Endothelial cell of umbilical vein (primary cell): ENCODE measurements at regions of chr15 and their contacts with region 1.

Region 1: GRCh38 chr15:45037936-45038335 is 14.9 kb downstream of the SORD start:
- DNase-seq: no peak
- H3K4me3 ChIP-seq: no peak overlapping the region
- H3K27ac ChIP-seq: no peak overlapping the region
- H3K4me1 ChIP-seq: peaks cover 5% of the 10 kb centered on the region
- H3K27me3 ChIP-seq: no peaks in the 10 kb centered on the region
- CTCF ChIP-seq: no peak
- POLR2A ChIP-seq: no peak

Region 2: DNA sequence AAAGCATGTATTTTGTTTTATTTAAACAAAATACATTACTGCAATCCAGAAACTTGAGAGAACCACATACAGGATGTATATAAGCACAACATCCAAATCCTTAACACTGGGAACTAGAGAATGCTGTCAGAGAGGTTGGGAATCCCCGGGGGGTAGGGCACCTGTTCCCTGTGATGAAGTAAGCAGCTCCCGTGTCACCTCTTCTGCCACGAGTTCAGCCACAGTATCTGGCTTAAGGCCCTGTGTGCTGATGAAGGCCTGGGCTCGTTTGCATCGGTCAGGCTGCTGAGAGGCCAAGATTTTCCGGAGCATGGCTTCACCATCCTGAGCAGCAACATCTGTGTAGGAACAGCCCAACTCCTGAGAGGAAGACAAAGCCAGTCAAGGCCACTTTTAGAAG is 464.6 kb before region 1 on chr15:
- CTCF ChIA-PET with region 1: no interaction called
- POLR2A ChIA-PET with region 1: no interaction called
- dilution Hi-C with region 1: no loop called
- intact Hi-C with region 1: loop called (anchors 5 kb)
- DNase-seq: no peak
- H3K4me3 ChIP-seq: no peak overlapping the region
- H3K27ac ChIP-seq: no peak overlapping the region
- H3K4me1 ChIP-seq: no peaks in the 10 kb centered on the region
- H3K27me3 ChIP-seq: no peaks in the 10 kb centered on the region
- CTCF ChIP-seq: no peak
- POLR2A ChIP-seq: no peak

Region 3: DNA sequence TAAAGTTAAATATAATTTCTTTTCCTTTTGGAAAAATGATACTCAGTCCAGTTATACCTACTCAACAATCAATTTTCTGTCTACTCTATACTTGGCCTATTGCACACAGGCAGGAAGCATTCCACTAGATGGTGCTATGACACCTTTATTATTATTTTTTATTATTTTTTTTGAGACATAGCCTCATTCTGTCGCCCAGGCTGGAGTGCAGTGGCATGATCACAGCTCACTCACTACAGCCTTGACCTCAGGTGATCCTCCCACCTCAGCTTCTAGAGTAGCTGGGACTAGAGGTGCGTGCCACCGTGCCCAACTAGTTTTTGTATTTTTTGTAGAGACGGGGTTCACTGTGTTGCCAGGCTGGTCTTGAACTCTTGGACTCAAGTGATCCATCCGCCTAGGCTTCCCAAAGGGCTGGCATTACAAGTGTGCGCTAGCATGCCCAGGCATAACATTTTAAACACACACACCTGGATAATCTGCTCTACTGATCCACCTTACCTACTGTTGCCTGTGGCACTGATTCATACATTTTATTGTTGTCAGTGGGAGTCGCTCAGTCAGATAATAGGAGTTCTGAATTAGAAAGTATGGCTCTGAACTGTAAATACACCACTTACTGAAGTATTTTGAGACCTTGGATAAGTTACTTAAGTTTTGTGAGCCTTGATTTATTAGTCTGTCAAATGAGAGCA is 444.7 kb before region 1 on chr15:
- CTCF ChIA-PET with region 1: interaction called, 3 read pairs
- POLR2A ChIA-PET with region 1: no interaction called
- dilution Hi-C with region 1: no loop called
- intact Hi-C with region 1: loop called (anchors 5 kb)
- DNase-seq: no peak
- H3K4me3 ChIP-seq: no peak overlapping the region
- H3K27ac ChIP-seq: no peak overlapping the region
- H3K4me1 ChIP-seq: peaks cover 10% of the 10 kb centered on the region
- H3K27me3 ChIP-seq: no peaks in the 10 kb centered on the region
- CTCF ChIP-seq: peak; percentile 39 to 47
- POLR2A ChIP-seq: no peak

Region 4: DNA sequence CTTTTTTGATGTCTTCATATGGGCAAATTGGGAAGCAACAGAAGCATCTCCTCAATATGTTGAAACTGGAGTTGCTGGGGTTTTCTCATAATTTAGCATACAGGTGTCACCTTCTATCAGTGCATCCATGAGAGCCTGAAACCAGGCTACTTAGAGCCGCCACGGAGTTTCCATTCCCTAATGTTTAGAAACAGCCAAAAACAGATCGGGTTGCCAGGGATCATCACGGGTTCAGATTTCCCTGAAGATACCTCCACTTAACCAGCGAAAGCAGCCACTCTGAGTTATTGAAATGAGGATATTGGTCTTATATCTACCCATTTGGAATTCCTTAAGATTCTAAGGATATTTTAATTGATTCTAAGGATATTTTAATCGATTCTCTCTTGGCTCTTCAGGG is 66.9 kb before region 1 on chr15:
- CTCF ChIA-PET with region 1: interaction called, 62 read pairs
- POLR2A ChIA-PET with region 1: no interaction called
- dilution Hi-C with region 1: no loop called
- intact Hi-C with region 1: loop called (anchors 1 kb)
- DNase-seq: no peak
- H3K4me3 ChIP-seq: no peak overlapping the region
- H3K27ac ChIP-seq: no peak overlapping the region
- H3K4me1 ChIP-seq: no peaks in the 10 kb centered on the region
- H3K27me3 ChIP-seq: no peaks in the 10 kb centered on the region
- CTCF ChIP-seq: no peak
- POLR2A ChIP-seq: no peak

Region 5: GRCh38 chr15:45022871-45023658 is 14.9 kb before region 1 on chr15 and contains the start of gene SORD:
- CTCF ChIA-PET with region 1: interaction called, 15 read pairs
- POLR2A ChIA-PET with region 1: interaction called, 7 read pairs
- dilution Hi-C with region 1: no loop called
- intact Hi-C with region 1: no loop called
- DNase-seq: peak; percentile 90
- H3K4me3 ChIP-seq: peak within 1 kb of the TSS; percentile 46 to 75 (median 70)
- H3K27ac ChIP-seq: peak within 1 kb of the TSS; percentile 53
- H3K4me1 ChIP-seq: peaks cover 25% of the 10 kb centered on the region
- H3K27me3 ChIP-seq: peaks cover 0 to 2% of the 10 kb centered on the region in 2 experiments
- CTCF ChIP-seq: no peak
- POLR2A ChIP-seq: no peak
- total RNA-seq, gene SORD: 16.6 and 23.0 TPM in 2 replicates